Activated CD8-positive, alpha-beta memory T cell treated with anti-CD3 and anti-CD28 coated beads, Interleukin-2, amount 10 ng/mL, durations not matched to agents 7 days and 5 days (primary cell): ENCODE measurements at regions of chr3 and their contacts with region 1.

Region 1: DNA sequence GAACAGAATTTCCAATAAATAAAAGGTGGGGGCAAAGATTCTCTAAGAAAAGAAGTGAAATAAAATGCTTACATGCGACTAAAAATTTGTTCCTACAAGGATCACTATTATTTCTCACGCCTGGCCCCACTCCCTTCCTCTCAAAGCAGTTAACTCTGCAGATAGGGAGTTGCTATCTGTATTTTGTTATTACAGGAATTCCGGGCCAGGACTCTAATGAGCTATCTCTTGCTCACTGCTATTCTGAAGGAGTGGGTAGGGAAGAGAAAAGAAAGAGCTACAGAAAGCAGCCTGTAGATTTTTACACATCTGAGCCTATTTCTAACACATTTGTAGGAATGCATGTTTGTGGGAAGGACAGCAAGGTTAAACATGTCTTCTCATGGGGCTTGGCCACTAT is 140.4 kb downstream of the PCCB start:
- DNase-seq: no peak
- ATAC-seq: no peak
- H3K4me3 Mint-ChIP-seq: no peak overlapping the region
- H3K27ac Mint-ChIP-seq: no peak overlapping the region
- H3K4me1 Mint-ChIP-seq: no peaks in the 10 kb centered on the region
- H3K27me3 Mint-ChIP-seq: no peaks in the 10 kb centered on the region

Region 2: DNA sequence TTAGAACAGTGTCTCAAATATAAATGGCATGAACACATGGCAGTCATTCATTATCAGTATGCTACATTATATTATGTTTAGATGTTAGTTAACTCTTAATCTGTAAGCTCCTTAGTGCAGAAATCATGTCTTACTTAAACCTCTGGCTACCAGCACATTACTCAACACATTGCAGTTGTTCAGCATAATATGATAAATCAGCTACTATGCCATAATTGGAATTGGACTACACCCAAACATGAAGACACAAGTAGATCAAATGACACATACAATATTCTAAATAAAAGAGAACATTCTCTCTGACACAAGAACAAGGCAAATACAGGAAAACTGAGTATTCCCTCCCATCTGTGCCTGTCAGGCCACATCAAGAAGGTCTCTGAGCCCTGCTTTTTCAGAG is 24.3 kb before region 1 on chr3:
- CTCF ChIA-PET with region 1: interaction called, 10 read pairs
- DNase-seq: no peak
- ATAC-seq: no peak
- H3K4me3 Mint-ChIP-seq: no peak overlapping the region
- H3K27ac Mint-ChIP-seq: no peak overlapping the region
- H3K4me1 Mint-ChIP-seq: no peaks in the 10 kb centered on the region
- H3K27me3 Mint-ChIP-seq: no peaks in the 10 kb centered on the region